CD14-positive monocyte (primary cell): ENCODE measurements at regions of chr12 and their contacts with region 1.

Region 1: GRCh38 chr12:98660521-98660920 is 15.4 kb downstream of the APAF1 start:
- DNase-seq: no peak
- H3K4me3 ChIP-seq: no peak overlapping the region
- H3K4me3 Mint-ChIP-seq: no peak overlapping the region
- H3K27ac ChIP-seq: no peak overlapping the region
- H3K27ac Mint-ChIP-seq: peak overlapping the region in 1 of 7 donors; percentile 22
- H3K4me1 ChIP-seq: no peaks in the 10 kb centered on the region
- H3K4me1 Mint-ChIP-seq: peaks cover 4% of the 10 kb centered on the region
- H3K27me3 ChIP-seq: no peaks in the 10 kb centered on the region
- H3K27me3 Mint-ChIP-seq: peaks cover 0 to 1% (median 0%) of the 10 kb centered on the region in 3 donors
- CTCF ChIP-seq: no peak

Region 2: DNA sequence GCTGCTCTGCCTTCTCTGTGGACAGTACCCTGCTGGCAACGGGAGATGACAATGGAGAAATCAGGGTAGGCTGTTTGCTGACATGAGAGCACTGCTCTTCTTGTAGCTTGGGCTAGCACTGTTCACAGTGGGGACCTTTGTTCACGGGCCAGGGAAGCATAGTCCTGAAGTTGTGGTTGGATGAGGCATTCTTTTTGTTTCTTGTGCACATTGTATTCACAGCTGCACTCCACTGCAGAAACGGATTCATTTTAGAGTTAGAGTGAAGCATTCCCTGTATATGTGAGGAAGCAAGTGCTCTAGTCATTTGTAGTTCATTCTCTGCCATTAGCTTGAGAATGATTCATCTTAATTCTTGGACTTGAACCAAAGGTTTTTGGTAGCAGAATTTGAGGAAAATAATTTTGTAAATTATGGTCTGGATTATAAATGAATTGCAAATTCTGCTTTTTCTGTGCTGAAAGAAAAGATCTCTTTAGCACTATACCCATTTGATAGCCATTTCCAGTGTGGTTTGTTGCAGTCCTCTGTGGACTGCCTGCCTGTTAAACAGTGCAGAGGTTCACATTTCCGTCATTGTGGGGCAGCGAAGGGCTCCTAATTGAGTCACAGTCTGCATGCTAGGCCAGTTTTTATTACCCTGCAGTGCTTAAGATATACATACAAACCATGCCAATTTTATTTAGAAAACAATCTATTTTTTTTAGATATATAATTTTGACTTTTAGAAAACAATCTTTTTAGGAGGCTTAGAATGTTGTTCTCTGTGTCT is 65.1 kb after region 1 on chr12:
- intact Hi-C with region 1: loop called in 1 of 2 experiments (anchors 5 kb)
- DNase-seq: no peak
- H3K4me3 ChIP-seq: no peak overlapping the region
- H3K4me3 Mint-ChIP-seq: no peak overlapping the region
- H3K27ac ChIP-seq: peak overlapping the region in 1 of 2 donors; percentile 27
- H3K27ac Mint-ChIP-seq: peak overlapping the region in 4 of 7 donors; percentile 5 to 84 (median 72)
- H3K4me1 ChIP-seq: no peaks in the 10 kb centered on the region
- H3K4me1 Mint-ChIP-seq: peaks cover 3% of the 10 kb centered on the region
- H3K27me3 ChIP-seq: no peaks in the 10 kb centered on the region
- H3K27me3 Mint-ChIP-seq: no peaks in the 10 kb centered on the region
- CTCF ChIP-seq: no peak